ENCODE measurements at regions of chr6 and their contacts with region 1.

Region 1: GRCh38 chr6:6547110-6547879 is 41.2 kb upstream of the LY86 start:
- DNase-seq: peak; percentile 86 to 87 (median 86)
- ATAC-seq: peak; percentile 100
- H3K4me3 ChIP-seq: no peak overlapping the region
- H3K27ac ChIP-seq: no peak overlapping the region
- H3K4me1 ChIP-seq: peaks cover 0 to 10% of the 10 kb centered on the region in 2 experiments; a peak in 2 of 5 replicates
- H3K27me3 ChIP-seq: peaks cover 17 to 47% of the 10 kb centered on the region in 2 experiments
- CTCF ChIP-seq: peak; percentile 89 to 96 (median 94)
- EP300 ChIP-seq: no peak
- POLR2A ChIP-seq: no peak
- RAD21 ChIP-seq: peak; percentile 96

Region 2: GRCh38 chr6:5143634-5144311 is 1403.5 kb before region 1 on chr6:
- CTCF ChIA-PET with region 1: interaction called, 3 read pairs
- POLR2A ChIA-PET with region 1: no interaction called
- in situ Hi-C with region 1: loop called (anchors 25 kb)
- intact Hi-C with region 1: no loop called
- DNase-seq: peak; percentile 70 to 86 (median 76)
- ATAC-seq: peak; percentile 95
- H3K4me3 ChIP-seq: no peak overlapping the region
- H3K27ac ChIP-seq: no peak overlapping the region
- H3K4me1 ChIP-seq: no peaks in the 10 kb centered on the region
- H3K27me3 ChIP-seq: no peaks in the 10 kb centered on the region
- CTCF ChIP-seq: peak; percentile 91 to 97 (median 94)
- EP300 ChIP-seq: no peak
- POLR2A ChIP-seq: no peak
- RAD21 ChIP-seq: peak; percentile 96 to 97

Region 3: GRCh38 chr6:6105472-6106036 is 441.7 kb before region 1 on chr6:
- CTCF ChIA-PET with region 1: no interaction called
- POLR2A ChIA-PET with region 1: no interaction called
- in situ Hi-C with region 1: no loop called
- intact Hi-C with region 1: loop called (anchors 1 kb)
- DNase-seq: peak in 1 of 4 experiments; percentile 9
- ATAC-seq: peak; percentile 71; the same call in 2 of the 3 replicates
- H3K4me3 ChIP-seq: no peak overlapping the region
- H3K27ac ChIP-seq: no peak overlapping the region
- H3K4me1 ChIP-seq: no peaks in the 10 kb centered on the region
- H3K27me3 ChIP-seq: no peaks in the 10 kb centered on the region
- CTCF ChIP-seq: peak; percentile 38 to 47 (median 39)
- EP300 ChIP-seq: no peak
- POLR2A ChIP-seq: no peak
- RAD21 ChIP-seq: peak; percentile 16 to 26; a peak in 1 of 4 replicates

Region 4: GRCh38 chr6:6221787-6222535 is 325.3 kb before region 1 on chr6:
- CTCF ChIA-PET with region 1: no interaction called
- POLR2A ChIA-PET with region 1: no interaction called
- in situ Hi-C with region 1: no loop called
- intact Hi-C with region 1: loop called (anchors 10 kb)
- DNase-seq: peak; percentile 46 to 60 (median 52)
- ATAC-seq: peak; percentile 80
- H3K4me3 ChIP-seq: no peak overlapping the region
- H3K27ac ChIP-seq: no peak overlapping the region
- H3K4me1 ChIP-seq: no peaks in the 10 kb centered on the region; a peak in 1 of 5 replicates
- H3K27me3 ChIP-seq: no peaks in the 10 kb centered on the region; a peak in 1 of 5 replicates
- CTCF ChIP-seq: peak; percentile 60 to 62 (median 60)
- EP300 ChIP-seq: no peak
- POLR2A ChIP-seq: no peak
- RAD21 ChIP-seq: 0 out of 4 replicates have a peak, but pooled peaks of 1 of the 2 experiments have one; percentile 32

Region 5: DNA sequence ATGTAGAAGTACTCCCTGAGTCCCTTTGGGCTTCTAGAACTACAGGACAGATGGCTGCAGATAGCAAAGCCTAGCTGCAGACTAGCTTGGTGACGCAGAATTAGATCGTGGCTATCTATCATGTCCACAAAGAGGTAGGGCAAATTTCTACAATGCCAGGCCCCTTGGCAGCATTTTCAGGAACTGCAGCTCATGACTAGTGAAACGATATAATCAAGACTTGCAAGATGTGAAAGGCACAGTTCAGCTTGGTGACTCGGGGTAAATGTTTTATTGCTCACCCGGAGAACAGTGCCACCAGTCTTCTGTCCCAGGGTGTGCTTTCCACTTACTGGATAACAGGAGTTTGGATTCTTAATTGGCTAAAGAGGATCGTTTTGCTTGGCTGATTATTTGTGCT is 67.5 kb before region 1 on chr6:
- CTCF ChIA-PET with region 1: no interaction called
- POLR2A ChIA-PET with region 1: no interaction called
- in situ Hi-C with region 1: no loop called
- intact Hi-C with region 1: no loop called
- DNase-seq: no peak
- ATAC-seq: no peak
- H3K4me3 ChIP-seq: no peak overlapping the region
- H3K27ac ChIP-seq: no peak overlapping the region
- H3K4me1 ChIP-seq: no peaks in the 10 kb centered on the region
- H3K27me3 ChIP-seq: peaks cover 0 to 5% of the 10 kb centered on the region in 2 experiments; a peak in 2 of 5 replicates
- CTCF ChIP-seq: no peak
- EP300 ChIP-seq: no peak
- POLR2A ChIP-seq: no peak
- RAD21 ChIP-seq: no peak